Activated CD4-positive, alpha-beta T cell treated with anti-CD3 and anti-CD28 coated beads, Interleukin-2, amount 10 ng/mL, durations not matched to agents 7 days and 5 days (primary cell): ENCODE measurements at regions of chr19 and their contacts with region 1.

Region 1: GRCh38 chr19:50357178-50358100 is 8.0 kb downstream of the NAPSA start:
- DNase-seq: peak; percentile 91
- H3K4me3 Mint-ChIP-seq: peak overlapping the region; percentile 83
- H3K27ac Mint-ChIP-seq: peak overlapping the region; percentile 99
- H3K4me1 Mint-ChIP-seq: peaks cover 43% of the 10 kb centered on the region
- H3K27me3 Mint-ChIP-seq: no peaks in the 10 kb centered on the region

Region 2: DNA sequence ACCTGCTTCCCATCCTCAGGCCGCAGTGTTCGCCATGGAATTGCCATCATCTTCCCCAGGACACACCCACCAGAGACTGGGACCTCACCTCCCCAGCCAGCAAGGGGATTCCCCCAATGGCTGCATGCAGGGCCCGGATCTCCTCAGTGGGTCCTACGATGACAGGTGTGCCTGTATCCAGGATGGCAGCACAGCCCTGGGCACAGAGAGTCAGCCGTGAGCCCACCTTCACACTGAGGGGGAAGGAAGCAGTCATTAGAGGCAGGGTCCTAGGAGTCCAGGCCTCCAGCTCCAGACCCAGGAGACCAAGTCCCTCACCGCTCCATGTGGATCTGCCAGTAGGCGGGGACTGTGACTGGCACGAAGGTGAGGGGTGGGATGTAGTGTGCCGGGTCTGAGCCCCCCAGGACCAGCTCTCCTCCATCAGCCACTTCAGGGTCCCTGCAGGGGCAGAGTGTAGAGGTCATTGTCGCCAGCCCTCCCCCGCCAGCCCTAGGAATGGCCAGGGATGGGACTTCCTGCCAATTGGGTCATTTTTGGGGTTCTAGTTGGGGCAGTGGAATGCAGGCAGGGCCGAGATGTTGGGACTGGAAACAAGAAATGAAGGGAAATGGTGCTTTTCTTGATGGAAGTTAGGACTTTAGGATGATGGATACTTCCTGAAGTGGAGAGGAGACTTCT is 22.6 kb before region 1 on chr19:
- CTCF ChIA-PET with region 1: interaction called, 16 read pairs
- POLR2A ChIA-PET with region 1: no interaction called
- DNase-seq: no peak
- H3K4me3 Mint-ChIP-seq: peak overlapping the region; percentile 27
- H3K27ac Mint-ChIP-seq: peak overlapping the region; percentile 62
- H3K4me1 Mint-ChIP-seq: peaks cover 53% of the 10 kb centered on the region
- H3K27me3 Mint-ChIP-seq: peaks cover 4% of the 10 kb centered on the region

Region 3: DNA sequence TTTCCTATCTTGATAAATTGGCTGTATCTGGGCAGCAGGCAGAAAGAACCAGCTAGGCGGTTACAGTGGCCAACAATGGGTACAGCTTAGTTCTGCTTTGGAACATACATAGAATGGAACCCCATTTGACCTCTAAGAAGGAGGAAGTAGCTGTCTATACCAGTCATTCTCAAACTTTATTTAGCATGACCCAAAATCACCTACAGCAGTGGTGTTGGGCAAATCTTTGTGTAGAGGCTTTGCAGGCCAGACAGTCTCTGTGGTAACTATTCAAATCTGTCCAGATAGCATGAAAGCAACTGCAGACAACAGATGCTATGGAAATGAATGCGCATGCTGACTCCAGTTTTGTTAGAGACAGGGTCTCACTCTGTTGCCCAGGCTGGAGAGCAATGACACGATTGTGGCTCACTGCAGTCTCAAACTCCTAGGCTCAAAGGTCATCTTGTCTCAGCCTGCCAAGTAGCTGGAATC is 16.3 kb before region 1 on chr19:
- CTCF ChIA-PET with region 1: interaction called, 19 read pairs
- POLR2A ChIA-PET with region 1: no interaction called
- DNase-seq: no peak
- H3K4me3 Mint-ChIP-seq: no peak overlapping the region
- H3K27ac Mint-ChIP-seq: no peak overlapping the region
- H3K4me1 Mint-ChIP-seq: peaks cover 12% of the 10 kb centered on the region
- H3K27me3 Mint-ChIP-seq: no peaks in the 10 kb centered on the region

Region 4: GRCh38 chr19:50368649-50369570 is 11.5 kb after region 1 on chr19:
- CTCF ChIA-PET with region 1: interaction called, 12 read pairs
- POLR2A ChIA-PET with region 1: no interaction called
- DNase-seq: peak; percentile 78
- H3K4me3 Mint-ChIP-seq: peak overlapping the region; percentile 84
- H3K27ac Mint-ChIP-seq: peak overlapping the region; percentile 87
- H3K4me1 Mint-ChIP-seq: peaks cover 40% of the 10 kb centered on the region
- H3K27me3 Mint-ChIP-seq: no peaks in the 10 kb centered on the region

Region 5: DNA sequence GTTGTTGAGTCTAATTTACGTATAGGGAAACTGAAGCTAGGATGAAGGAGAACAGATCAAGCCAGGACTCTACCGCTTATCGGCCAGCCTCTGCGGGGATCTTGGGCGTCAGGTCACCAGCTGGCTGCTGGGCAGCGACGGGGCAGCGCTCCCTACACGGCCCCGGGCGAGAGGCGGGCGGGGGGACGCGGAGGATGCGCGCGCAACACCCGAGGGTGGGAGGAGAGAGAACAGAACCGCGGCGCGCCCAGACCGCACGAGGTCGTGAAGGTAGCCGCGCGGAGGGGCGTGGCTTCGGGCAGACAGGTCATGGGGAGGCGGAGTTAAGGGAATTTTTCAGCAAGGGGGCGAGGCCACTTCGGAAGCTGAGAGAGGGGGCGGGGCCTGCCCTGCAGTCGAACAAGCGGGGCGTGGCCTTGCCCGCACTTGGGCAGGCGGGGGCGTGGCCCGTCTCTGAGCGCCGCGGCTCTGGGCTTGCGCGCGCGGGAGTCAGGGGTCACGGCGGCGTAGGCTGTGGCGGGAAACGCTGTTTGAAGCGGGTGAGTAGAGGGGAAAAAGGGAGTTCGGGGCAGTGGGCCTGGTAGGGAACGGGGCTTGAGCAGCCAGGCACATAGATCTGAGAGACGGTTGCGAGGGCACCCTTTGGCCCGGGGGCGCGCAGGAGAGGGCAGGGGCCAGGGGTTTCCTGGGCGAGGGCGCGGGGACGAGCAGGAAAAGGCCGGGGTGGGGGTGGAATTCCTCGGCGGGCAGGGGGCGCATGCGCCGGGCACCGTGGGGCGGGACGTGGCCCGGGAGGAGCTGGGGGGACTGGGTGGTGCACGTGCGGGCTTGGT is 26.6 kb after region 1 on chr19 and contains the start of gene POLD1:
- CTCF ChIA-PET with region 1: no interaction called
- POLR2A ChIA-PET with region 1: no interaction called
- DNase-seq: peak; percentile 99
- H3K4me3 Mint-ChIP-seq: peak within 1 kb of the TSS; percentile 96
- H3K27ac Mint-ChIP-seq: peak within 1 kb of the TSS; percentile 97
- H3K4me1 Mint-ChIP-seq: peaks cover 39% of the 10 kb centered on the region
- H3K27me3 Mint-ChIP-seq: no peaks in the 10 kb centered on the region
- total RNA-seq, gene POLD1: 156 to 167 TPM

Region 6: DNA sequence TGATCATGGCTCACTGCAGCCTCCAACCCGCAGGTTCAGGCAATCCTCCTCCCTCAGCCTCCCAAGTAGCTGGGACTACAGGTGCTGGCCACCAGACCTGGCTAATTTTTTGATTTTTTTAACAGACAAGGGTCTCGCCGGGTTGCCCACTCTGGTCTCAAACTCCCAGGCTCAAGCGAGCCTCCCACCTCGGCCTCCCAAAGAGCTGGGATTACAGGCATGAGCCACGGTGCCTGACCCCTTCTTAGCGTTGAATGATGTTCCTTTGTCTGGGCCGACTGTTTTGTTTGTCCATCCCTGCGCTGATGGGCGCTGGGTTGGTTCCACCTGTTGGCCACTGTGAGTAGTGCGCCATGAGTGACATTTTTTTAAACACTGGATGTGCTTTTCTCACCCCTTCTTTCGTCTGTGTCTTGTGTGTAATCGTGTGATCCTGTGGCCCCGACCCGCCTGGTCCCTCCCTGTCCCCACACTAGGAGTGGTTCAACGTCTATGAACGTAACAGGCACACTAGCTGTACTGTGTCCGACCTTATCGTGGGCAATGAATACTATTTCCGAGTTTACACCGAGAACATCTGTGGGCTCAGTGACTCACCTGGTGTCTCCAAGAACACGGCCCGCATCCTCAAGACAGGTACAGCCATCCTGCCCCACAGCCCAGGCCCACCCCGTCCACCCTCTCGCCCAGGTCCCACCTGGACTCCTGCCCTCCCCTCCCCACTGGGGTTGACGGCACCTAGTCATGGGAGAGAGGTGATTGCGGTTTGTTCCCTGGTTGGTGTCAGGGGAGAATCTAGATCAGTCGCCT is 103.8 kb after region 1 on chr19:
- CTCF ChIA-PET with region 1: interaction called, 17 read pairs
- POLR2A ChIA-PET with region 1: no interaction called
- DNase-seq: peak; percentile 69
- H3K4me3 Mint-ChIP-seq: no peak overlapping the region
- H3K27ac Mint-ChIP-seq: no peak overlapping the region
- H3K4me1 Mint-ChIP-seq: peaks cover 15% of the 10 kb centered on the region
- H3K27me3 Mint-ChIP-seq: peaks cover 9% of the 10 kb centered on the region